Heart right ventricle (tissue), 16 donors: ENCODE measurements at regions of chr16 and their contacts with region 1.

Region 1: DNA sequence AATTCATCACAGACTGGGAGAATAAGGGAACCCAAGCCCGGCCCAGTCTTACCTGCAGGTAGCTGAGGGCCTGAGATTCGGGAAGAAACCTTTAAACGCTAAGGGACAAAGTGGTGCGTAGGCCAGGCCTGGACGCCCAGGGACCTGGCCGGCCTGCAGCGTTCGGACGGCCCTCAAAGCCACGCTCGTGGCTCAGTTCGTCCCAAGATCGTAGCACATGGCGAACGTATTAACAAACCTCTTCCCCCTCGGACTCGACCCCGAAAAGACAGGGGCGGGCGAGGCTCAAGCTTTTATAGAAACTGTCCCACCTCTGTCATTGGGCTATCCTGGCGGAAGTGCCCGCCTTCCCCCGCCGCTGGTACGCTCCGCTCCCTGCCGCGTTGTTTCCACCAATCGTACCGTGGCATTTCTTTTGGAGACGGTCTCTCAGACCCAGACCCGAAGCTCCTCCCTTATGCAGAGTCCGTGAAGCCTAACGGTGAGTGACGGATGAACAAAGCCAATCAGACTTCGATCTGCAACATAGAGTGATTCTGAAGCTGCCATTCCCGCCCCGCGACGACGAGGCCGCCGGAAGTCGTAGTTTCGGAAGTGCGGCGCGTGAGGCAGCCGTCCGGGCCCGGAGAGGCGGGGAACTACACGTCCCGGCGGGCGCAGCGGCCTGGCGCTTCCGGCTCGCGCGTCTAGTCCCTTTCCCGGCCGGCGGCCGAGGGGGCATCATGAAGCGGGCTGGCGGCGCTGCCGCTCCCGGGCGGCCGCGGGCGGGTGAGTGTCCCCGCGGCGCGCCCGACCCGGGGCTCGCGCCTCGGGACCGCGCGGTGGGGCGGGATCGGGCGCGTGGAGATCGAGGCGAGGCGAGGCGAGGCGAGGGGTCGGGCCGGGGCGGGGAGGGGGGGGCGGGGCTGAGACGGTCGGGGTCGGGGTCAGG is at the start of gene TRAF7:
- DNase-seq: peak; percentile 98 to 100
- ATAC-seq: peak; percentile 90 to 96 (median 94)
- H3K4me3 ChIP-seq: peak within 1 kb of the TSS; percentile 53 to 92 (median 80)
- H3K27ac ChIP-seq: peak within 1 kb of the TSS in 9 of 10 donors; percentile 64 to 89 (median 86)
- H3K4me1 ChIP-seq: peaks cover 39 to 89% (median 77%) of the 10 kb centered on the region in 9 donors
- H3K27me3 ChIP-seq: no peaks in the 10 kb centered on the region
- CTCF ChIP-seq: no peak
- total RNA-seq, gene TRAF7: 16.9 to 44.9 (median 23.8) TPM

Region 2: DNA sequence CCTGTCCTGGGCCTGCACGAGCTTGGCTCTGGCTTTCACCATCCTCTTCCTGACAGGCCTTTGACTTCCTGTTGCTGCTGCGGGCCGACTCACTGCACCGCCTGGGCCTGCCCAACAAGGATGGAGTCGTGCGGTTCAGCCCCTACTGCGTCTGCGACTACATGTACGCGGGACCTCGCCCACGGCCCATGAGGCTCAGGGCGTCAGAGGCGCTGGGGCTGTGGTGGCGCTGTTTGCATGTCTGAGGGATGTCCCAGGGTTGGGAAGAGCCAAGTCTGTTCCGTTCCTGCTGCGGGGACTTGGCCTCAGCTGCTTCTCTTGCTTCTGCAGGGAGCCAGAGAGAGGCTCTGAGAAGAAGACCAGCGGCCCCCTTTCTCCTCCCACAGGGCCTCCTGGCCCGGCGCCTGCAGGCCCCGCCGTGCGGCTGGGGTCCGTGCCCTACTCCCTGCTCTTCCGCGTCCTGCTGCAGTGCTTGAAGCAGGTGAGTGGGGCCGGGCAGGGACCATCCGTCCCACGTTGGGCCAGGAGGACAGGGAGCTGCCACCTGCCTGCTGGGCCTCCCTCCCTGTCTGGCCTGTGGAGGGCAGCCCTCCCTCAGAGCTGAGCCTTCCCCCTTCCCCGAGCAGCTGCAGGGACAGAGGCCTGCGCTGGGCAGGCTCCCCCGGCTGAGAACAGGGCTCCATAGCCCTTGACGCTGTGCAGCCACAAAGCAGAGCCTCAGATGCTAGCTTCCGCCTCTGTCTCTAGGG is 83.7 kb before region 1 on chr16:
- intact Hi-C with region 1: no loop called
- DNase-seq: no peak
- ATAC-seq: peak in 5 of 8 donors; percentile 8 to 24 (median 14)
- H3K4me3 ChIP-seq: no peak overlapping the region
- H3K27ac ChIP-seq: no peak overlapping the region
- H3K4me1 ChIP-seq: no peaks in the 10 kb centered on the region
- H3K27me3 ChIP-seq: no peaks in the 10 kb centered on the region
- CTCF ChIP-seq: no peak

Region 3: DNA sequence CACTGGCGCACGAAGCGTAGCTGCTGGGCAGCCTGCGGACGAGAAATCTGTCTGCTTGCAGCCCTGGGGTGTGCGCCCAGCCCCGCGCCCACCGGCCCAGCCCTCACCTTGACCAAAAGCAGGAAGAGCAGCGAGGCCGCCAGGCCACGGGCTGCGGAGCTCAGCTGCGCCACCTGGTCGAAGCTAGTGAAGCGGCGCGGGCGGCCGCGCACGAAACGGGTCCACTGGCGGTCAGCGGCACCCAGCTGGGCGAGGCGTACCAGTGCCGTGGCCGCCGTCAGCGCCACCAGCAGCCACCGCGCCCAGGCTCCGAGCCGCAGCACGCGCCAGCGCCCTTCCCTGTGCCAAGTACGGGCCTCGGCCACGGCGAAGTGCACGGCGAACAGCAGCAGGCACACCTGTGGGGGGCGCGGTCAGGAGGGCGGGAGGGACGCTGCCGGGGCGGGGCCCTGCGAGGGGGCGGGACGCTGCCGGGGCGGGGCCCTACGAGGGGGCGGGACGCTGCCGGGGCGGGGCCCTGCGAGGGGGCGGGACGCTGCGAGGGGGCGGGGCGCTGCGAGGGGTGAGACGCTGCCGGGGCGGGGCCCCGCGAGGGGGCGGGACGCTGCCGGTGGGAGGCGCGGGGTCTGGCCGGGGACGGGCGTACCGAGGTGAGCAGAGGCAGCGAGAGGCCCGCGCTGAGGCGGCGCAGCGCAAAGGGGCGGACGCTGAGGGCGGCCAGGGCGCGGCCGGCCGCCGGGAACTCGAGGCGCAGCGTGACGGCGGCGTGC is 64.4 kb before region 1 on chr16:
- intact Hi-C with region 1: no loop called
- DNase-seq: peak; percentile 43 to 73
- ATAC-seq: peak; percentile 15 to 61 (median 28)
- H3K4me3 ChIP-seq: peak overlapping the region in 5 of 10 donors; percentile 2 to 24 (median 11)
- H3K27ac ChIP-seq: peak overlapping the region in 9 of 10 donors; percentile 71 to 88 (median 78)
- H3K4me1 ChIP-seq: peaks cover 0 to 16% (median 0%) of the 10 kb centered on the region in 9 donors
- H3K27me3 ChIP-seq: no peaks in the 10 kb centered on the region
- CTCF ChIP-seq: peak in 3 of 9 donors; percentile 21 to 37 (median 25)

Region 4: DNA sequence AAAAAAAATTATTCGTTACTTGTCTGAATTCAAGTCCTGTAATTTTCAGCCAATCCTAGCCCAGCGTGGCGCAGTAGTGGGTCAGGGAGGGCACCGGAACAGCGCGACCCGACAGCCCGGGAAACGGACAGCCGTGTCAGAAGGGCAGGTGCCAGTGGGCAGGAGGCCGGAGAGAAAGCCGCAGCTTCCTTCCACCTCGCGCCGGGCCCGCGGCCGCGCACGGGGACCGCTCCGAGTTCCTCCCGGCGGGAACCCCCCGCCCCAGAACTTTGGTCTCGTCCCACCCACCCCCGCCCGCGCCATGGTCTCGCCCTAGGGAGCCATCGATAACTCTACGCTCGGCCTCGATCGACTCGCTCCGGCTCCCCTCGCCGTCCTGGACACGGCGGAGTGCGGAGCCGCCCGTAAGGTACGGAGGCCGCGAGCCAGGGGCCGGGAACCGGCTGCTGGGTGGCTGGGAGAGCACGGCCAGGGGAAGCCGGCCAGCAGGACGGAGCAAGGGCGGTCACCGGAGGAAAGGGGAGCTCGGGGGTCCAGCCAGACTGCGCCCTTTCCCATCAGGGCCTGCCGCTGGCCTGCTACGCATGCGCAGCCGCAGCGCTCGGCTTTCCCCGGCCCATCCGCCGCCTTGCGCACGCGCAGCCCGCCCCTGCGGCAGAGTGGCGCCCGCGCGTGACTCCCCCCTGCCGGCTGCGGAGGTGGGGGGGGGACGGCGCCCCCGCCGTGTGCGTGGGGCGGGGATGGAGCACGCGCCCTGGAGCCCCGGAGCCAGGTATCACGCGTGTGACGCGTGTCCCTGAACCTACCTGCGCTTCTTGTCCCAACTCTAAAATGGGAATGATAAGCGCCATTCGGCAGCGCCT is 50.0 kb after region 1 on chr16 and contains the start of gene MLST8:
- intact Hi-C with region 1: loop called in 1 of 10 experiments (anchors 5 kb)
- DNase-seq: peak; percentile 82 to 91
- ATAC-seq: peak; percentile 76 to 91 (median 86)
- H3K4me3 ChIP-seq: peak within 1 kb of the TSS; percentile 56 to 88 (median 76)
- H3K27ac ChIP-seq: peak within 1 kb of the TSS; percentile 93 to 100 (median 98)
- H3K4me1 ChIP-seq: peaks cover 9 to 30% (median 15%) of the 10 kb centered on the region in 9 donors
- H3K27me3 ChIP-seq: no peaks in the 10 kb centered on the region
- CTCF ChIP-seq: peak in 7 of 9 donors; percentile 8 to 41 (median 18)
- total RNA-seq, gene MLST8: 19.3 to 28.8 (median 23.6) TPM

Region 5: GRCh38 chr16:2251483-2252240 is 96.3 kb after region 1 on chr16 and contains the start of gene ECI1:
- intact Hi-C with region 1: loop called in 2 of 10 experiments (anchors 5 kb)
- DNase-seq: peak; percentile 96 to 99
- ATAC-seq: peak; percentile 96 to 99 (median 98)
- H3K4me3 ChIP-seq: peak within 1 kb of the TSS; percentile 46 to 99 (median 76)
- H3K27ac ChIP-seq: peak within 1 kb of the TSS; percentile 82 to 98 (median 94)
- H3K4me1 ChIP-seq: peaks cover 7 to 28% (median 18%) of the 10 kb centered on the region in 9 donors
- H3K27me3 ChIP-seq: no peaks in the 10 kb centered on the region
- CTCF ChIP-seq: peak; percentile 57 to 94 (median 79)
- total RNA-seq, gene ECI1: 118 to 243 (median 153) TPM